RWPE1 (cell line): ENCODE measurements at regions of chr5 and their contacts with region 1.

Region 1: GRCh38 chr5:66814146-66814991 is 218.2 kb downstream of the MAST4 start:
- DNase-seq: peak; percentile 83
- H3K27ac ChIP-seq: no peak overlapping the region
- CTCF ChIP-seq: peak; percentile 91

Region 2: GRCh38 chr5:66666778-66667177 is 147.6 kb before region 1 on chr5:
- CTCF ChIA-PET with region 1: no interaction called
- POLR2A ChIA-PET with region 1: no interaction called
- DNase-seq: peak; percentile 14
- H3K27ac ChIP-seq: no peak overlapping the region
- CTCF ChIP-seq: no peak

Region 3: DNA sequence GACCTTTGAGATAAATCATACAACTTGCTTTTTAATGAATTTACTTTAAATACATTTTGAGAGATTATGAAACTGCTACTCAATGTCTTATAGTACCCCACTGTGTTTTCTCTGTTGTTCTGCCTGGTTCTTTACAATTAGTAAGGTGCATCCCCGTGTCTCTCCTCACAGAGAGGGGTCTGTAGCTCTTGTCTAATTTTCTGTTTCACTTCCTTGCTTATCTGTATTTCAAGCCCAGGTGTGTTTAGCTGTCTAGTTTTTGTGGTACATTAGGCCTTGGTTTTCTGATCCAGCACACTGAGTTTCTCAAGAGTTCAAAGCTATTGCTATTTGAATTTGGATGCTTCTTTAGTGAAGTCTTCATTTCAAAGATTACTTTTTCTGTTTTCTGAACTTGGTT is 113.1 kb before region 1 on chr5:
- CTCF ChIA-PET with region 1: no interaction called
- POLR2A ChIA-PET with region 1: no interaction called
- DNase-seq: no peak
- H3K27ac ChIP-seq: no peak overlapping the region
- CTCF ChIP-seq: no peak

Region 4: DNA sequence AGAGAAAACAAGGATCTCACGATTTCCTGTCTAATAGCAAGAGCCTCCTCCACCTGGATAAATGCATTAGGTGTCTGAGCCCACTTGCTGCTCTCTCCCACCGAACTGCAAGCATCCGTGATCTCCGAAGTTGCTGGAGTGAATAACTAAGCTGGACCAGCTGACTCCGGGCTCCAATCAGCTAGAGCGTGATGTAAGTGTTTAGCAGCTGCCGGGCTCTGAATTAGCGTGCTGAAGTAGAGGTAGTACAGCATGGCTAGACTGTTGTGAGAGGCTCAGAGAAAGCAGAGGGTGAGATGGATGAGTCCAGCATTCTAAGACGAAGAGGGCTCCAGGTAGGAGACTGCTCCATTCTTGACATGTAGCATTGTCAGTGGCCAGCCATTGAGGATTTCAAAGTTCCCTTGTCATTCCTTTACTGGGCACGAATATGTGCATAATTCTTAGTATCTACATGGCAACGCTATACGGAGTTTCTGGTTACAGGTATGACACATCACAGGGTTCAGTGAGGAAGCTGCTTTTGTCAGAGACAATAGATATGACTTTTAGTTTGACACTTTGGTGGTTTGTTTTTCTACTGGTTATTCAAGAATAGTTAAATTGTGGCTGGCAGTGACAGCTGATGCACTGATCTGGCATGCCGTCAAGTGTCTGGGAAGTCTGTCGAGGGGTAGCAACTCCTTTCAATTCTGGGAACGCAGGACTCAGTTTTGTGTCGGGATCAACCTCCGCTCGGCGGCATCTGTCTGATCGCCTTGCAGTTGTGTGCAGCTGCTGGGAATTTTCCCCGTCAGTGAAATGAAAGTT is 14.4 kb after region 1 on chr5:
- CTCF ChIA-PET with region 1: interaction called, 27 read pairs
- POLR2A ChIA-PET with region 1: no interaction called
- DNase-seq: peak; percentile 51
- H3K27ac ChIP-seq: peak overlapping the region; percentile 67
- CTCF ChIP-seq: no peak

Region 5: DNA sequence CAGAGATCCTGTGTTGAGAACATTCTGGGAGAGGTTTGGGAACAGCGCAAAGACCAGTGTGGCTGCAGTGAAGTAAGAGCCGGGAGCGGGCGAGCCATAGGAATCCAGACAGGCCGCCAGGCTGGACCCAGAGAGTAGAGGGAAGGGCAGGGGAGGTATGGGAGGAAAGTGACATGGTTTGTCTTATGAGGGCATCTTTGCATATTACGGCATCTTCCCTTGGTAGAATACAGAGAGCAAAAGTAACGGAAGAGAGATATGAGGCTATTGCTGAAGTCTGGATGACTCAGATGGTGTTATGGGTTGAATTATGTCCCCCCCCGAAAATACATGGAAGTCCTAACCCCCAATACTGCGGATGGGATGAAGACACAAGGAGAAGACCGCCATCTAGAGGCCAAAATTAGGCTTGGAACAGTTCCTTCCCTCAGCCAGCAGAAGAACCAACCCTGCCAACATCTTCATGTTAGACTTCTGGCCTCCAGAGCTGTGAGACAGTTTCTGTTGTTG is 50.0 kb after region 1 on chr5:
- CTCF ChIA-PET with region 1: interaction called, 24 read pairs
- POLR2A ChIA-PET with region 1: no interaction called
- DNase-seq: peak; percentile 45
- H3K27ac ChIP-seq: no peak overlapping the region
- CTCF ChIP-seq: peak; percentile 84

Region 6: DNA sequence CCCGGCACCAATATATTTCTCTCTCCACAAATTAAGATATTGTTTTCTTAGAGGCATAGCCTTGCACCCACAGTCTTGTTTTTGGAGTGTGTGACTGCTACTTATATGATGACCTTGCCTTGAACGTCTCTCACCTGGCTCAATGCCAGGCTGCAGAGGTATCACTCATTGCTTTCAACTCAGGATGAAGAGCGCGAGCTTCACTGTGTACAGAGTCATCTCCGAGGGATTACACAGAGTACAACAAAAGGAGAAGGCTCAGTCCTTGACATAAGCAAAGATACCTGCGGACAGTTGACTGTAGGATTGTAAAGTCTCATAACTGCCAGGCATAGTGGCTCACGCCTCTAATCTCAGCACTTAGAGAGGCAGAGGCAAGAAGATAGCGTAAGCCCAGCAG is 328.4 kb after region 1 on chr5:
- CTCF ChIA-PET with region 1: no interaction called
- POLR2A ChIA-PET with region 1: no interaction called
- DNase-seq: no peak
- H3K27ac ChIP-seq: no peak overlapping the region
- CTCF ChIP-seq: no peak